ENCODE measurements at regions of chrX and their contacts with region 1.

Region 1: DNA sequence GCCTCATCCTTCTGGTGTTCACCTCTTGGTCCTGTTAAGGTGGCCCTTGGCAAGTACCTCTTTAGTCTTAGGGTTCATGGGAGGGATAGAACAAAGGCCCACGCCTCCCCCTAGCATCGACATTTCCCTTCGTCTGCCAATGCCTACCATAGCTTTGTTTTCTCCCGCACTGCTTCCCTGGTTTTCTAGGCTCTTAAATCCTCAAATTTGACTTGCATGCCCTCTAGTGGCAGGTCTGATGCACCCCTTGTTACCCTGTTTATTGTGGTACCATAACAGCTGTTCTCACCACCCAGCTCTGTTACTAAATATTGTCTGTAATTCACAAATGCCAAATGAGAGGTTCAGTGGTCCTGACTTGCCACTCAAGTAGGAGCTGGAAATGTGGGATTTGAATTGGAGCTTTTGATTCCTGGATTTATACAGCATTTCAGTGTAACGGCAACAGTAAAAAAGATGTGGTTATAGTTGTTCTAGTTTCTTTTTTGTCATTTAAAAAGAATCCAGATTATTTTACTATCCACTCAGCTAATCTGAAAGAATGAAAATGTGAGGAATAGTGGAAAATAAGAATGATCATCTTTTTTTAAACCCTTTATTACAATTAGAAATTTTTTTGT is 100.1 kb downstream of the REPS2 start:
- DNase-seq: peak; percentile 56
- H3K4me3 ChIP-seq: no peak overlapping the region
- H3K27ac ChIP-seq: no peak overlapping the region
- H3K4me1 ChIP-seq: no peaks in the 10 kb centered on the region
- H3K27me3 ChIP-seq: no peaks in the 10 kb centered on the region
- CTCF ChIP-seq: peak; percentile 93 to 97

Region 2: DNA sequence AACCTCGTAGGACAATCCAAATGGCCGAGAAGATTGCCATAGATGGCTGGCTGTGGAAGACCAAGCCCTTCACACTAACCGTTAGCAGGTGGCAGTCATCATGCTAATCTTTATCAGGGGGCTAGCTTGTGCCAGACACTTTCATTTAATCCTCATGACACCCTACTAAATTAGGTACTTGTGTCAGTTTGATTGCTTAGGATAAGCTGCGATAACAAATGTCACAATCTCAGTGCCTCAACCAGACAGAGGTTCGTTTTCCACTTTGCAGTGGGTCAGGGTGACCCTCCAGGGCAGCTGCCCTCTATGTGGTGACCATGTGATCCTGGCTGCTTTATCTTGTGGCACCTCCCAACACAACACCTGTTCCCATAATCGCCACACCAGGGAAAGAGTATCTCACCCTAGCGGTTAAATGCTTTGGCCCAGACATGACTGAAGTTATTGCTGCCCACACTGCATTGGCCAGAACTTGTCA is 39.3 kb before region 1 on chrX:
- CTCF ChIA-PET with region 1: interaction called, 4 read pairs
- dilution Hi-C with region 1: no loop called
- in situ Hi-C with region 1: no loop called
- intact Hi-C with region 1: loop called (anchors 1 kb)
- DNase-seq: peak; percentile 6
- H3K4me3 ChIP-seq: no peak overlapping the region
- H3K27ac ChIP-seq: no peak overlapping the region
- H3K4me1 ChIP-seq: no peaks in the 10 kb centered on the region
- H3K27me3 ChIP-seq: peaks cover 2% of the 10 kb centered on the region
- CTCF ChIP-seq: peak; percentile 10 to 22

Measured in mammary epithelial cell (primary cell).